ENCODE measurements at regions of chr19 and their contacts with region 1.

Region 1: GRCh38 chr19:18473003-18473705 is 35.2 kb upstream of the ISYNA1 start:
- DNase-seq: no peak
- H3K4me3 ChIP-seq: no peak overlapping the region
- H3K27ac ChIP-seq: peak overlapping the region in 1 of 2 donors; percentile 17
- H3K4me1 ChIP-seq: peaks cover 0 to 13% of the 10 kb centered on the region in 2 donors
- H3K27me3 ChIP-seq: no peaks in the 10 kb centered on the region
- CTCF ChIP-seq: no peak
- POLR2A ChIP-seq: no peak

Region 2: GRCh38 chr19:18449552-18449951 is 23.6 kb before region 1 on chr19:
- intact Hi-C with region 1: loop called (anchors 1 kb)
- DNase-seq: no peak
- H3K4me3 ChIP-seq: no peak overlapping the region
- H3K27ac ChIP-seq: no peak overlapping the region
- H3K4me1 ChIP-seq: no peaks in the 10 kb centered on the region
- H3K27me3 ChIP-seq: no peaks in the 10 kb centered on the region
- CTCF ChIP-seq: no peak
- POLR2A ChIP-seq: no peak